T-cell (primary cell): ENCODE measurements at regions of chr17 and their contacts with region 1.

Region 1: DNA sequence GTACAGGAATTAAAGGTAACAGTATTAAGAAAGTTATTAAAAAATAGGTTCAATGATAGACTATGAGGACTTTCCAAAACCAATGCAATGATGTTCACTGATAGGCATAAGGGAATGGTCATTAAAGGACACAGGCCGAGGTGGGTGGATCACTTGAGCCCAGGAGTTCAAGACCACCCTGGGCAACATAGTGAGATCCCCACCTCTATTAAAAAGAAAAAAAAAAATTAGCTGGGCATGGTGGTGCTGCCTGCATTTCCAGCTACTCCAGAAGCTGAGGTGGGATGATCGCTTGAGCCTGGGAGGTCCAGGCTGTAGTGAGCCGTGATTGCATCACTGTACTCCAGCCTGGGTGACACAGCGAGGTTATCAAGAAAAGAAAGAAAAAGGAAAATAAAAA is 5.9 kb downstream of the TOP2A start:
- DNase-seq: no peak
- ATAC-seq: no peak
- H3K4me3 ChIP-seq: no peak overlapping the region
- H3K4me3 Mint-ChIP-seq: no peak overlapping the region
- H3K27ac ChIP-seq: no peak overlapping the region
- H3K27ac Mint-ChIP-seq: no peak overlapping the region
- H3K4me1 ChIP-seq: no peaks in the 10 kb centered on the region
- H3K4me1 Mint-ChIP-seq: peaks cover 0 to 13% (median 8%) of the 10 kb centered on the region in 3 donors
- H3K27me3 ChIP-seq: no peaks in the 10 kb centered on the region
- H3K27me3 Mint-ChIP-seq: no peaks in the 10 kb centered on the region

Region 2: DNA sequence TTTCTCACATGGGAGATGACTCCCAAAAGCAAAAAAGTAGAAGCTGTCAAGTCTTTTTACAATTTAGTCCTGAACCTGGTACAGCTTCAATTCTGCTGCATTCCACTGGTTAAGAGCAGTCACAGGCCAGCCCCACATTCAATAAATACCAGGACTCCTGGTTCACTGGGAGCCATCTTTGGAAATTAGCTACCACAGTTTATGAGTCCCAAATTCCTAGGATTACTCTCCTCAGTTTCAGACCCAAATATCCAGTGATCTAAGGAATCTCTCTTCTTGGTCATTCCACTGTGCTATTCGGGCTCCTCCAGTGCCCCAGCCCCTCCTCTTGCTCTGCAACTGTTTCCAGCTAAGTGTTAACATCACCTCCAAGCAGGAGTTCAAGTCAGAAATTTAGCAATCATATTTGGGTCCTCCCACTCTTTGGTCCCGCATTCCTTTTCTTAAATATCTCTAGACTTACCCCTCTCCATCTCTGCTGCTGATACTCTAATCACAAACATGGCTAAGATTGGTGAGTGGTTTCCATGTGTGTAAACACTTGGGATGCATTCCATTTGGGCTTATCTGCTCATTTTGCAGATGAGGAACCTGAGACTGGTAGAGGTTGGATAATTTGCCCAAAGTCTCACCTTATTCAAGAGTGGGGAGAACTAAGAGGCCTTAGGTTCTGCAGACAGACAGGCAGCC is 202.3 kb before region 1 on chr17:
- CTCF ChIA-PET with region 1: interaction called in 1 of 2 experiments, 10 read pairs
- POLR2A ChIA-PET with region 1: no interaction called
- DNase-seq: no peak
- ATAC-seq: no peak
- H3K4me3 ChIP-seq: no peak overlapping the region
- H3K4me3 Mint-ChIP-seq: no peak overlapping the region
- H3K27ac ChIP-seq: no peak overlapping the region
- H3K27ac Mint-ChIP-seq: no peak overlapping the region
- H3K4me1 ChIP-seq: no peaks in the 10 kb centered on the region
- H3K4me1 Mint-ChIP-seq: no peaks in the 10 kb centered on the region
- H3K27me3 ChIP-seq: peaks cover 0 to 7% of the 10 kb centered on the region in 2 experiments
- H3K27me3 Mint-ChIP-seq: peaks cover 0 to 3% of the 10 kb centered on the region in 2 donors

Region 3: GRCh38 chr17:40331743-40332641 is 79.8 kb before region 1 on chr17:
- CTCF ChIA-PET with region 1: no interaction called
- POLR2A ChIA-PET with region 1: no interaction called
- DNase-seq: no peak
- ATAC-seq: peak in 1 of 4 experiments; percentile 8
- H3K4me3 ChIP-seq: no peak overlapping the region
- H3K4me3 Mint-ChIP-seq: peak overlapping the region in 2 of 3 donors; percentile 15 to 62
- H3K27ac ChIP-seq: no peak overlapping the region
- H3K27ac Mint-ChIP-seq: peak overlapping the region; percentile 83 to 99
- H3K4me1 ChIP-seq: peaks cover 60 to 88% of the 10 kb centered on the region in 2 experiments
- H3K4me1 Mint-ChIP-seq: peaks cover 74 to 83% (median 82%) of the 10 kb centered on the region in 3 donors
- H3K27me3 ChIP-seq: no peaks in the 10 kb centered on the region
- H3K27me3 Mint-ChIP-seq: no peaks in the 10 kb centered on the region

Region 4: GRCh38 chr17:40364121-40364861 is 47.5 kb before region 1 on chr17 and contains the start of gene GJD3:
- CTCF ChIA-PET with region 1: interaction called in 1 of 2 experiments, 4 read pairs
- POLR2A ChIA-PET with region 1: interaction called in 1 of 2 experiments, 11 read pairs
- DNase-seq: no peak
- ATAC-seq: no peak
- H3K4me3 ChIP-seq: peak within 1 kb of the TSS in 1 of 2 donors; percentile 9
- H3K4me3 Mint-ChIP-seq: peak within 1 kb of the TSS; percentile 62 to 66 (median 63)
- H3K27ac ChIP-seq: no peak within 1 kb of the TSS
- H3K27ac Mint-ChIP-seq: no peak within 1 kb of the TSS
- H3K4me1 ChIP-seq: peaks cover 0 to 16% of the 10 kb centered on the region in 2 experiments
- H3K4me1 Mint-ChIP-seq: peaks cover 0 to 10% (median 10%) of the 10 kb centered on the region in 3 donors
- H3K27me3 ChIP-seq: peaks cover 0 to 42% of the 10 kb centered on the region in 2 experiments
- H3K27me3 Mint-ChIP-seq: peaks cover 13 to 14% of the 10 kb centered on the region in 2 donors
- total RNA-seq, gene GJD3: not detected